BJ (cell line): ENCODE measurements at regions of chr16 and their contacts with region 1.

Region 1: DNA sequence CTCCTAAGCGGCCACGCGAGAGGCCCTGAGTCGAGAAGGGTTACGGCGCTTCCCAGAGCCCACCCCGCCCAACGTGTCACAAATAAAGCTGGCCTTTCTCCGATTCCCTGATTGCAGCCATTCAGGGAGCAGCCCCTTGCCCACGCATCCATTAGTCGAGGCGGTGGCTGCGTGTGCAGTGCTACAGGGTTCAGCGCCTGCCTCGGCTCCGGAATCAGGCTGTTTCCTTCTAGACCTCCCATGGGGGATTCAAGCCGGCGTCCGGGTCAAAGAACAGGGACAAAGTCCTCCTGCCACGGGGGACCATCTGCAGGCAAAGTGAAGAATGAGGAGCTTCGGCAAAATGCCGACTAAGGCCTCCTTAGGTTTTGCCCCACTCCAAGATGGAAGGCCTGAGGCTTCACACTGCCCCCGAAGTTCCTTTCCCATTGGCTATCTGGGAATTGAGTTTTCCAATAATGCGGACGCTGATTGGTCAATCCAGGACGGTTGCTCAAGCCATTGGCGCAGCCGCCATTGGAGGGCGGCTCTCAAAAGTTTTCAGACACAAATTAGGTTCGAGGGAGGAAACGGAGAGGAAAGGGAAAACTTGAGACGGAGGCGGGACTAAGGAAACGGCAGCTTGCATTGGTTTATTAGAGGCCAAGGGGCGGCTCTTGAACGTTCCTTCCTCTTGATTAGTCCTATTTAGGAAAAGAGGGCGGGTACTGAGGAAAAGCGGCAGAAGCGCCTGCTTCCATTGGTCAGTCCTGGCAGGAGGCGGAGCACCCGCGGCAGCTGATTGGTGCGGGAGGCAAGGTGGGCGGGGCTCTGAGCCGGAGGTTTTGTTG is 430 bp upstream of the KATNB1 start:
- DNase-seq: peak; percentile 100
- H3K4me3 ChIP-seq: peak overlapping the region; percentile 87
- H3K27me3 ChIP-seq: no peaks in the 10 kb centered on the region
- CTCF ChIP-seq: no peak

Region 2: GRCh38 chr16:57679016-57679415 is 56.1 kb before region 1 on chr16:
- CTCF ChIA-PET with region 1: no interaction called
- POLR2A ChIA-PET with region 1: no interaction called
- DNase-seq: no peak
- H3K4me3 ChIP-seq: no peak overlapping the region
- H3K27me3 ChIP-seq: peaks cover 9% of the 10 kb centered on the region
- CTCF ChIP-seq: no peak

Region 3: DNA sequence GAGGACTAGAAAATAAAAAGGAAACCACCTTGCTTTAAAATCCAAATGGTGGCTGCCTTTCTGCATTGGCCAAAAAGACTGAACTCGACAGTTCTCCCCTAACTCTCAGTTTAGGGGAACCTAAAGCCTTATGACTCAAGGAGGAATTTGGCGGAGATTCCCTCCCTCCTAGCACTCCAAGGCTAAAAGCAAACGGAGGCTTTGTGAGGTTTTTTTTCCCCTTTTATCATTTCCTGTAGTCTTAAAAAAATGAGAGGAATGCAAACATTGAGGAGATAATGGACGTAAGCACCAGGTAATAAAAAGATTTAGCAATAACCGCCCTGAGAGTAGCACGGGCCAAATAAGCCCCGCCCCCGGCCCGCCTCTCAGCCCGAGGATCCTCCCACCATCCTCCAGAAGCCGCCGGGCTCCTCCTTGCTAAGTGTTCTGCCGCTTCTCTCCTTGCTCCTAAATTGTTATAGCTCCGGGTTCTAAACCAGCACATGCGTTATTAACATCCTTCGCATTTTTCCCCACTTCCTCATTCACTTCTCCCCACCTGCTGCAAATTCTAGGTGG is 72.9 kb after region 1 on chr16:
- CTCF ChIA-PET with region 1: no interaction called
- POLR2A ChIA-PET with region 1: interaction called, 12 read pairs
- DNase-seq: peak; percentile 96
- H3K4me3 ChIP-seq: no peak overlapping the region
- H3K27me3 ChIP-seq: no peaks in the 10 kb centered on the region
- CTCF ChIP-seq: no peak

Region 4: GRCh38 chr16:57882792-57883191 is 147.7 kb after region 1 on chr16:
- CTCF ChIA-PET with region 1: no interaction called
- POLR2A ChIA-PET with region 1: interaction called, 10 read pairs
- DNase-seq: no peak
- H3K4me3 ChIP-seq: no peak overlapping the region
- H3K27me3 ChIP-seq: peaks cover 15% of the 10 kb centered on the region
- CTCF ChIP-seq: no peak